Activated naive CD4-positive, alpha-beta T cell treated with anti-CD3 and anti-CD28 coated beads, Interleukin-2, amount 10 ng/mL, durations not matched to agents 7 days and 5 days (primary cell): ENCODE measurements at regions of chr1 and their contacts with region 1.

Region 1: GRCh38 chr1:119675349-119676345 is 27.6 kb upstream of the ZNF697 start:
- DNase-seq: peak; percentile 80
- H3K4me3 Mint-ChIP-seq: no peak overlapping the region
- H3K27ac Mint-ChIP-seq: no peak overlapping the region
- H3K4me1 Mint-ChIP-seq: peaks cover 5% of the 10 kb centered on the region
- H3K27me3 Mint-ChIP-seq: peaks cover 41% of the 10 kb centered on the region

Region 2: DNA sequence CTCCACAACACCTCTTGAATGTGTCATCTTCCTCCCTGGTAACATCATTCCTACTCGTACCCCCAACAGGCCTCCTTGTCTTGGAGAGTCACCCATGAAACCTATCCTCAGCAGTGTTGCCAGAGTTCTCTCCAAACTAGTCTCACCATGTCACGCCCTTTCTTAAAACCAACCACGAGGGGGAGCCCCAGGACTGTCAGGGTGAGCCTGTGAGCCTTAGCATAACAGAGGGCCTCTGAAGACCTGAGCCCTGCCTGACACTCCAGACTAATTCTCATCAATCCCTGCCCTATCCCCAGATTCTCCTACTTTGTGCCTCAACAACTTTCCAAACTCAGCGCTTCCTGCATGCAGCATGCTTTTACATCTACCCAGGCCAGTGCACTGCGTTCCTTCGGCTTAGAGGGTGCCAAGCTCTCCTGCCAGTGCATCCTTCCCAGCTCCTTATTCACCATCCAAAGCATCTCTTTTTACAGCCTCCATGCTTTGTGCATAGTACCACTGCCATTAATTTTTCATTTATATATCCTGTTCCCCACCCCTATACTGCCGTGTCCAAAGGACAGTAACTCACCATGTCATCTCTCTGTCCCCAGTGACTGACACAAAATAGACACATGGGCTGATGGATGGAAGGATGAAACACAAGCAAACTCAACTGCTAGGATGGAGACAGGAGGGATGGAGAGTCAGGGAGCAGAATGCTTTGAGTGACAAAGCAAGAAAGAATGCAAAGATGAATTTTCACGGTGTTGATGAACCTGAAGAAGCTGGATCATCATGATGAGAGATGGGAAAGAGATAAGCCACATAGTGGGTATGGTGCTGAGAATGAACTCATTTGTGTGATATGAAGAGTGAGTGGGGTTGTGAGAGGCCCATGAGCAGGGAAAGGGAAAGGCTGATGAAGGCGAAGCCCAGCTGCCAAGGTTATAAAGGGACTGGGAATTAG is 61.6 kb before region 1 on chr1:
- CTCF ChIA-PET with region 1: interaction called, 120 read pairs
- DNase-seq: peak; percentile 82
- H3K4me3 Mint-ChIP-seq: no peak overlapping the region
- H3K27ac Mint-ChIP-seq: no peak overlapping the region
- H3K4me1 Mint-ChIP-seq: no peaks in the 10 kb centered on the region
- H3K27me3 Mint-ChIP-seq: peaks cover 18% of the 10 kb centered on the region

Region 3: DNA sequence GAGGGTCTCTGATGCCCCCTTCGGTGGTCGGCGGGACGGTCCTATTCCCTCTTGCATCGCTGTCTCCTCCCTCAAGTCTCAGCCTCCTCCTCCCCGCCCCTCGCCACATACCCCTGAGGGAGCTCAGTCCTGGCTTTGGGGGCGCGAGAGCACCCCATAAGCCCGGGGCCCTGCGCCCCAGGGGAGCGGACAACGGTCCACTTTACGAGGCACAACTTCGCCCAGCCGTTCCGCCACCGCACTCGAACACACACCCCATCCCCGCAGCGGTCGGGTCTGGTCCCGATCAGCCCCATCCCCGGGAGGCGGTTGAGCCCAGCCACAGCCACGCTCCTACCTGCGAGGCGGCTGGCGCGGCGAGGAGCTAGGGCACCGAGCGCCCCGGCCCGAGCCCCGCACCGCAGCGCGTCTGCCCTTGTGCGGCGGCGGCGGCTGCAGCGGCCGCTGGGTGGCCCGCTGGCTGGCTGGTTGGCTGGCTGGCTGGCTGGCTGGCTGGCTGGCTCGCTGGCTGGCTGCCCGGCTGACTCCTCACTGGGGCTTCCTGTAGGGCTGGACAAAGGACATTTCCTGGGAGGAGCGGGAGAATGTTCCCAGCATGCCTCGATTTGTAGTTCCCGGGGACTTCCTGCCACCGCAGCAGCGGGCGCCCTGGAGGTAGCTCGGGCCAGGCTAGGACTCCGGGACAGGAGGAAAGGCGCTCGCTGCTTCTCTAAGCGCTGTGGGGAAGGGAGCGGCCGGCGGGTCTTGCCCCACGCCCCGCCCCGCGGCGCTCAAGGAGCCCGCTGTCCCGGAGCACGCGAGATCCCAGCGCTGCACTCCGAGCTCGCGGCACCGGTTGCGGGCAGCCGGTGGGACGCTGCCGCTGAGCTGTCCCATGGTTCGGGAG is 27.7 kb before region 1 on chr1 and contains the start of gene ZNF697:
- CTCF ChIA-PET with region 1: interaction called, 10 read pairs
- DNase-seq: peak; percentile 52
- H3K4me3 Mint-ChIP-seq: peak within 1 kb of the TSS; percentile 72
- H3K27ac Mint-ChIP-seq: no peak within 1 kb of the TSS
- H3K4me1 Mint-ChIP-seq: peaks cover 12% of the 10 kb centered on the region
- H3K27me3 Mint-ChIP-seq: peaks cover 87% of the 10 kb centered on the region

Region 4: DNA sequence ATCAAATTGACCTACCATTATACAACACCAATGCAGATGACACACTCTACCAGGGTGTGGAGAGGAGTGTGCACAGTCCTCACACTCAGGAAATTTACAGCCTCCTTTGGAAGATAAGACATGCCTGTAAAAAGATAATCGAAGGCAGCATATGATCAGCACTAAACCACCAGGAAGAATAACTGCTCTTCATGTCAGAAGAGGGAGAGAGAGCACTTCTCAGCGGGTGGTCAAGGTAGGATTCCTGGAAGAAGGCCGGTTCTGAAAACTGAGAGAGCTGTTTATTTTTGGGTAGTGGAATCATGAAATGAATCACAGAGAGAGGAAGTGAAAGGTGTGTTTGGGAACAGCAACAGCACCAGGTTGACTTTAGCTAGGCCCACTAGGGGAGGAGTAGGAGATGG is 13.6 kb before region 1 on chr1:
- CTCF ChIA-PET with region 1: interaction called, 44 read pairs
- DNase-seq: no peak
- H3K4me3 Mint-ChIP-seq: no peak overlapping the region
- H3K27ac Mint-ChIP-seq: no peak overlapping the region
- H3K4me1 Mint-ChIP-seq: peaks cover 8% of the 10 kb centered on the region
- H3K27me3 Mint-ChIP-seq: peaks cover 46% of the 10 kb centered on the region